Breast epithelium (tissue), 4 donors: ENCODE measurements at regions of chr1 and their contacts with region 1.

Region 1: GRCh38 chr1:103469801-103470200 is 55.7 kb upstream of the RNPC3 start:
- DNase-seq: no peak
- H3K4me3 ChIP-seq: no peak overlapping the region
- H3K27ac ChIP-seq: no peak overlapping the region
- H3K4me1 ChIP-seq: no peaks in the 10 kb centered on the region
- H3K27me3 ChIP-seq: no peaks in the 10 kb centered on the region
- CTCF ChIP-seq: no peak
- POLR2A ChIP-seq: no peak

Region 2: GRCh38 chr1:101479945-101480344 is 1989.9 kb before region 1 on chr1:
- intact Hi-C with region 1: loop called (anchors 5 kb)
- DNase-seq: no peak
- H3K4me3 ChIP-seq: no peak overlapping the region
- H3K27ac ChIP-seq: no peak overlapping the region
- H3K4me1 ChIP-seq: no peaks in the 10 kb centered on the region
- H3K27me3 ChIP-seq: no peaks in the 10 kb centered on the region
- CTCF ChIP-seq: no peak
- POLR2A ChIP-seq: no peak

Region 3: GRCh38 chr1:103525607-103526507 is 56.1 kb after region 1 on chr1 and contains the start of gene RNPC3:
- intact Hi-C with region 1: no loop called
- DNase-seq: peak; percentile 82 to 83
- H3K4me3 ChIP-seq: peak within 1 kb of the TSS; percentile 70 to 94 (median 91)
- H3K27ac ChIP-seq: peak within 1 kb of the TSS; percentile 95
- H3K4me1 ChIP-seq: peaks cover 0 to 12% of the 10 kb centered on the region in 2 donors
- H3K27me3 ChIP-seq: no peaks in the 10 kb centered on the region
- CTCF ChIP-seq: no peak
- POLR2A ChIP-seq: no peak
- total RNA-seq, gene RNPC3: 41.0 to 67.8 (median 58.7) TPM